CD4-positive, alpha-beta memory T cell (primary cell): ENCODE measurements at regions of chr9 and their contacts with region 1.

Region 1: DNA sequence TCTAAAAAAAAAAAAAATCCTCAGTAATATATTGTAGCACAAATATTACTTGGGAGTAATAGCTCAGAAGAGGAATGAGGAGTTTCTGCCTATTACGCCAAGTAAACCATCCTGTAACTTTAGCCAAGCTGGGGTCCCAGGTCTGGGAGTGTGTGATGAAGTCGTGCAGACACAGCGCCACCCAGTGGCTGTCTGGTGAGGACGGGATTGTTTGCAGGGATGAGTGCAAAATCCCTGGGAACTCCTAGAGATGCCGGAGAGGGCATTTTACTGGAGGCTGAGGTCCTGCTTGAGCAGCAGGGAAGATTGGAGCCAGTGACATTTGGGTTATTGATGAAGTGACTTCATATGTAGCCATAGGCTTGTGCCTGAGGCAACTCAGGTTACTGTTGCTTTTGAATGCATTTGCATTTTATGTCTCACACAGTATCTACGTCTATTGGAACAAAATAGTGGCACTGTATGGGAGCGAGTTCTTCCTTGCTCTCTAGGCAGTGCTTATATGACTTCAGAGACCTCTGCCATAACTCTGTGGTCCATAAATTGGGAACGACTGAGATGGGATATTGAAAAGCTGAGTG is 72.8 kb downstream of the PSAT1 start:
- DNase-seq: peak in 4 of 5 donors; percentile 28 to 42 (median 36)
- H3K4me3 ChIP-seq: no peak overlapping the region
- H3K4me3 Mint-ChIP-seq: no peak overlapping the region
- H3K27ac ChIP-seq: no peak overlapping the region
- H3K27ac Mint-ChIP-seq: no peak overlapping the region
- H3K4me1 ChIP-seq: no peaks in the 10 kb centered on the region
- H3K4me1 Mint-ChIP-seq: peaks cover 0 to 5% (median 1%) of the 10 kb centered on the region in 4 donors
- H3K27me3 ChIP-seq: peaks cover 7% of the 10 kb centered on the region
- H3K27me3 Mint-ChIP-seq: peaks cover 22 to 26% of the 10 kb centered on the region in 2 donors

Region 2: DNA sequence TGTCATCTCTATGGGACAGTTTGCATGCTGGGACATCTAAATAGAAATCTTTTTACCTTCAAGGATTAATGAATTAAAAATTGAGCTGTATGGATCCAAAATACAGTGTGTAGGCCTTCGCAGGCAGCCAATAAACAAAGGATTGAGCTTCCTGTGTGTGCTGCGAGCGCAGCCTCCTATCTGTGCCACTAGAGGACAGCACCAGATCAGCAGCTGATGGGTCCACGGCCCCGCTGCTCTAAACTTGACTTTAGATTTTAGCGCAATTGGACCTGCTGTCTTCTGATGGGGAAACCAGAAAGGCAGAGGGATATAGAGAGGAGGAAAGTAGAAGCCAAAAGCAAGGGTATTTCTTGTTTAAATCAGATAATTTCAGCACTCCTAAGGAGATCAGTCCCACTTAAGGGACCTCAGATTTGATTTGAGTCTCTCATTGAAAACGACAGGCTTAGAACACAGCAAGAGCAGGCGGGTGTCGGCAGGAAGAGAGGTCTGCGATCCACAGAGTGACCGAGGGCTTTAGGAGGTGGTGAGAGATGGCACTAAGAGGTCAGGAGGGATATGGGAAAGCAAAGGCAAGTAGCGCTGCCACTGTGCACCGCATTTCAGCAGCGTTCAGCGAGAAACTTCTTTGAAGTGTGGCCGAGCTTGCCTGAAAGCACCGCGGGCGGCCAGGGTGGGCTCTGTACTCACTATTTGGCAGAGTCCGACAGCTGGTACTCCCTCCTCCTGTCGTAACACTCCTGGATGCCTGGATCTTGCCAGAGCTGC is 935.9 kb before region 1 on chr9:
- CTCF ChIA-PET with region 1: interaction called, 12 read pairs
- POLR2A ChIA-PET with region 1: no interaction called
- intact Hi-C with region 1: no loop called
- DNase-seq: peak; percentile 35 to 42 (median 39)
- H3K4me3 ChIP-seq: no peak overlapping the region
- H3K4me3 Mint-ChIP-seq: peak overlapping the region in 3 of 8 donors; percentile 19 to 70 (median 39)
- H3K27ac ChIP-seq: no peak overlapping the region
- H3K27ac Mint-ChIP-seq: peak overlapping the region in 2 of 7 donors; percentile 30 to 77
- H3K4me1 ChIP-seq: no peaks in the 10 kb centered on the region
- H3K4me1 Mint-ChIP-seq: peaks cover 1 to 5% (median 4%) of the 10 kb centered on the region in 4 donors
- H3K27me3 ChIP-seq: no peaks in the 10 kb centered on the region
- H3K27me3 Mint-ChIP-seq: peaks cover 2 to 3% of the 10 kb centered on the region in 2 donors

Region 3: GRCh38 chr9:78261403-78262001 is 108.2 kb before region 1 on chr9:
- CTCF ChIA-PET with region 1: interaction called, 37 read pairs
- POLR2A ChIA-PET with region 1: no interaction called
- intact Hi-C with region 1: no loop called
- DNase-seq: peak in 3 of 5 donors; percentile 16 to 20 (median 19)
- H3K4me3 ChIP-seq: no peak overlapping the region
- H3K4me3 Mint-ChIP-seq: no peak overlapping the region
- H3K27ac ChIP-seq: no peak overlapping the region
- H3K27ac Mint-ChIP-seq: no peak overlapping the region
- H3K4me1 ChIP-seq: no peaks in the 10 kb centered on the region
- H3K4me1 Mint-ChIP-seq: peaks cover 0 to 3% (median 0%) of the 10 kb centered on the region in 4 donors
- H3K27me3 ChIP-seq: no peaks in the 10 kb centered on the region
- H3K27me3 Mint-ChIP-seq: no peaks in the 10 kb centered on the region

Region 4: DNA sequence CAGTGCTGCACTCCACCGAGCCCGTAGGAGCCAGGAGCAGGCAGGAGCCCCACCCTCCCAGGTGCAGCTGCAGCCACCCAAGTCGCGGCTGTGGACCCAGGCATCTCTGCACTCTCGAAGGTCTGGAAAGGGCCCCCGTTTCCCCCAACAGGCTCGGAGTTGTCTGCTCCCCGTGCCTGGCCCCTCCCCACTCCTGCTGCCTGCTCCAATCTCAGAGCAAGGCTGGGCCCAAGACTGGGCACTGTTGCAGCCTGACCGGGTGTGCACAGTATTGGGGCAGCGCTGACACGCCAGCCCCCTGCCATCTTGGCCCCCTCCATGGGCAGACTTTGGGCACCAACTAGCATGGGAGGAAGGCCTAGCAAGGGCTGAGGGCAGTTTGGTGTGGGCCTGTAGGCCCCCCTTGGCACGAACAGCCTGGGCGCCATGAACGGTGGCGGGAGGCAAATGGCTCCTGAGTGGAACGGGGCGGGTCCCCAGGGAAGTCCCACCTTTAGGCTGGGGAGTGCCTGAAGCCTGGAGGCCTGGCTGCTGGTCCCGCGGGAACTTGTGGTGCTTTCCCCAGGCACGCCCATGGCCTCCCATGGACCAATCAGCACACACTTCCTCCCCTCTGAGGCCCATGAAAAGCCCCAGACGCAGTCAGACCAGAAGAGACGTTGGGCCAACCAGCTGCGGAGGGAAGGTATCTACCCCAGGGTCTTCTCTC is 12.4 kb before region 1 on chr9:
- CTCF ChIA-PET with region 1: interaction called, 13 read pairs
- POLR2A ChIA-PET with region 1: no interaction called
- intact Hi-C with region 1: no loop called
- DNase-seq: no peak
- H3K4me3 ChIP-seq: no peak overlapping the region
- H3K4me3 Mint-ChIP-seq: no peak overlapping the region
- H3K27ac ChIP-seq: no peak overlapping the region
- H3K27ac Mint-ChIP-seq: no peak overlapping the region
- H3K4me1 ChIP-seq: peaks cover under 1% of the 10 kb centered on the region
- H3K4me1 Mint-ChIP-seq: peaks cover 0 to 2% (median 1%) of the 10 kb centered on the region in 4 donors
- H3K27me3 ChIP-seq: no peaks in the 10 kb centered on the region
- H3K27me3 Mint-ChIP-seq: no peaks in the 10 kb centered on the region